ENCODE measurements at regions of chr21 and their contacts with region 1.

Region 1: GRCh38 chr21:44317241-44317782 is 17.5 kb downstream of the PFKL start:
- DNase-seq: no peak
- H3K4me3 ChIP-seq: no peak overlapping the region
- CTCF ChIP-seq: no peak

Region 2: DNA sequence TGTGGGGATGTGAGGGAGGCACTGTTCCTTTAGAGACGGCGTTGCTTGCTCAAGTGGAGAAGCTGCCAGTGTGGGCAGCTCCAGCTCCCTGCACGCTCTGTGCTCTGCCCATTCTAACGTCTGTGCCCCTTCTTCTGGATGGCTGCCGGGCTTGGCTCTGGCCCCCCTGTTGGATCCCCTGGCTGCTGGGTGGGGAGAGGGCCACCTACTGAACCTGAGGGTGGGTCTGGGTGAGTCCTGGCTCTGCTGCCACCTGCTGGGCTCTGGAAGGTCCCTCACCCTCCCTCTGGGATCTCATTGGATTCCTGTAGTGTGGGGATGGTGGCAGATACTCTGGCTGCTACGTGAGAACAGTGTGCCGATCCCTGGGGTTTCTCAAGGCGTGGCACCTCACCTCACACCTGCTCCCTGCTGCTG is 12.4 kb before region 1 on chr21:
- CTCF ChIA-PET with region 1: interaction called, 26 read pairs
- POLR2A ChIA-PET with region 1: interaction called, 4 read pairs
- DNase-seq: no peak
- H3K4me3 ChIP-seq: no peak overlapping the region
- CTCF ChIP-seq: peak; percentile 72

Region 3: DNA sequence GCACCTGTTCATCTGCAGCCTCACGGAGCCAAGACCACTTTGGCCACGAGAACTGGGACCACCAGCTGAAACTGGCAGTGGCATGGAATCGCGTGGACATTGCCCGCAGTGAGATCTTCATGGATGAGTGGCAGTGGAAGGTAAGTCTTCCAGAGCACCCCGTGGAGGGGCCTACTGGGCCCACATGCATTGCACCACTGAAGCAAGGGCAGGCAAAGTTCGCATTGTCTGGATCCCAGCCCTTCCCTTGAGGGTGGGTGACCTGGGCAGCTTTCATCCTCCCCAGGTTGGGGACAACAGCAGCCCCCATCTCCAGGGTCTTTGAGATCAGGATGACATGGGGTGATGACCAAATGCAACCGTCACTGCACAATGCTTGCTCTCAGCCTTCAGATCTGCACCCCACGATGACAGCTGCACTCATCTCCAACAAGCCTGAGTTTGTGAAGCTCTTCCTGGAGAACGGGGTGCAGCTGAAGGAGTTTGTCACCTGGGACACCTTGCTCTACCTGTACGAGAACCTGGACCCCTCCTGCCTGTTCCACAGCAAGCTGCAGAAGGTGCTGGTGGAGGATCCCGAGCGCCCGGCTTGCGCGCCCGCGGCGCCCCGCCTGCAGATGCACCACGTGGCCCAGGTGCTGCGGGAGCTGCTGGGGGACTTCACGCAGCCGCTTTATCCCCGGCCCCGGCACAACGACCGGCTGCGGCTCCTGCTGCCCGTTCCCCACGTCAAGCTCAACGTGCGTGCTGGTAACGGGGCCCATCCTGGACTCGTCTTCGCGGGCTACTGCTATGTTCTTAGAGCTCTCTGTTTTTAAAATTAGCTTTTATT is 73.8 kb after region 1 on chr21:
- CTCF ChIA-PET with region 1: no interaction called
- POLR2A ChIA-PET with region 1: no interaction called
- DNase-seq: no peak
- H3K4me3 ChIP-seq: no peak overlapping the region
- CTCF ChIP-seq: no peak

Region 4: GRCh38 chr21:44454747-44455523 is 137.6 kb after region 1 on chr21 and contains the start of gene LRRC3:
- CTCF ChIA-PET with region 1: no interaction called
- POLR2A ChIA-PET with region 1: no interaction called
- DNase-seq: no peak
- H3K4me3 ChIP-seq: peak within 1 kb of the TSS; percentile 42
- CTCF ChIP-seq: no peak

Measured in AG04449 (cell line).